Right lobe of liver (tissue), 6 donors: ENCODE measurements at regions of chr1 and their contacts with region 1.

Region 1: DNA sequence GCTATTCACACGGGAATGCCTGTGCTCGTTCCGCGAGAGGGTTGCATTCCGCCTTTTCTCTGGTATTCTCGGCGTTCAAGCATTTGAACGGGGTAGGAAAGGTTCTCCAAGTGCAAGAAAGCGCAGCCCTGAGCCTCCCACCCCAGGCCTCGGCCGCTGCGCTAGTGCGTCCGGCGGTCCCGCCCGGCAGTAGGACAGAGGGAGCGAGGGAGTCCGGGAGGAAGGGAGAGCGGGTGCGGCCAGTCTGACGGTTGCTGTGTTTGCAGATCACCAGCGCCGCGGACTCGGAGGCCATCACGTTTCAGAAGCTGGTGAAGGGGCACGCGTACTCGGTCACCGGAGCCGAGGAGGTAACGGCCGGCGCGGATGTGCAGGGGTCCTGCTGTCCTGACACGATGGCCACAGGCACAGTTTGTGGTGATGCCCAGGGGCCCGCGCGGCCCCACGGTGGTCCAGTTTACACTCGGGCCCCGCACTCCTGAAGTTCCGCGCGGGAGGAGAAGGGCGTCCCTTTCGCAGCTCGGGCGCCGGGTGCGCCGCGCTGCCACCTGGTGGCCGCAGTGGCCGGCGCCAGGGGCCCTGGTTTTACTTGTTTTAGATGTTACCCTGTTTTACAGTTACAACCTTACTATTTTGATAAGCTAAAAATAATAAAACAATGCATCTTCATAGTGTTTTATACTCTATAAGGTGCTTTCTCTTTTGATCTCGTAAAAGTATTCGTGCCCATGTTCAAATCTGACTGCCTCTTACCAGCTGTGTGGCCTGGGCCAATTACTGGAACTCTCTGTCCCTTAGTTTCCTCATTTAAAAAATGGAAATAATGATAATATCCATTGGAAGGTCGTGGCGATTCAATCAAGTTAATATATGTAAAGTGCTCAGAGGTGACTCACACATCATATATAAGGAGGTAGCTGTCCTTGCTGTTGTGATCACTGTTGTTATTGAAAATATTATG is 36.7 kb downstream of the CAPN2 start:
- DNase-seq: peak; percentile 68 to 78 (median 69)
- ATAC-seq: peak; percentile 89 to 95 (median 92)
- H3K4me3 ChIP-seq: peak overlapping the region; percentile 52 to 59 (median 57)
- H3K27ac ChIP-seq: peak overlapping the region in 2 of 3 donors; percentile 8 to 18
- H3K4me1 ChIP-seq: peaks cover 0 to 14% (median 0%) of the 10 kb centered on the region in 4 donors
- H3K27me3 ChIP-seq: no peaks in the 10 kb centered on the region
- CTCF ChIP-seq: peak; percentile 88 to 97 (median 96)
- POLR2A ChIP-seq: no peak

Region 2: DNA sequence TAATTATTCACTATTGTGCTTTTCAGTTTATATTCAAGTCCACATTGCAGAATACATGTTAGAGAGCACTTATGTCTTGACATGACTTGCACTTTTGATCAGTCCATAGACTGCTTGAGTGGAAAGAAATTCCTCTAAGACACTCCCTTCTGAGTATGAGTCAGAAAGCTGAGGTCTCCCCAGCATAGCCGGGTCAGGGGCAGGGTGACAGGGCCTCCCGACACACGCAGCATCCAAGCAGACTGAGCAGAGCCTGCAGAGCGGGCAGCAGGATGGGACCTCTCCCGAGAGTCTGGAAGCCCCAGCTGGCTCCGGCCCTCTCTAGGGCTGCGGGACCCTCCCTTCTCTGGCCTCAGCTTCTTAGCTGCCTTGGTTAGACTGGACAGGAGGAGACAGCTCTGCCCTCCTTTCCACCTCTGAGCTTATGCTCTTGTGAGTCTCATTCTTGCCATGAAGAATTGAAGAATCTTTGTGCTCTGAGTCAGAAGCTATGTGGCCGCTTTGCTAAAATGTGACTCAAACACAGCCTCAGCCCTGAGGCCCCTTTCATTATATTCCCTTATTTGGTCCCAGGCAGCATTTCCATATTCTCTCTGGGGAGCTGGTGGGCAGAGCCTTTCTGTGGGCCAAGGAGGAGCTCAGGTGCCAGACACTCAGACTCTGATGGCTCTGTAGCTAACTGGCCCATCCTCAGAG is 48.0 kb before region 1 on chr1:
- intact Hi-C with region 1: no loop called
- DNase-seq: no peak
- ATAC-seq: peak in 1 of 4 donors; percentile 22
- H3K4me3 ChIP-seq: no peak overlapping the region
- H3K27ac ChIP-seq: no peak overlapping the region
- H3K4me1 ChIP-seq: peaks cover 0 to 4% (median 0%) of the 10 kb centered on the region in 4 donors
- H3K27me3 ChIP-seq: no peaks in the 10 kb centered on the region
- CTCF ChIP-seq: no peak
- POLR2A ChIP-seq: no peak

Region 3: DNA sequence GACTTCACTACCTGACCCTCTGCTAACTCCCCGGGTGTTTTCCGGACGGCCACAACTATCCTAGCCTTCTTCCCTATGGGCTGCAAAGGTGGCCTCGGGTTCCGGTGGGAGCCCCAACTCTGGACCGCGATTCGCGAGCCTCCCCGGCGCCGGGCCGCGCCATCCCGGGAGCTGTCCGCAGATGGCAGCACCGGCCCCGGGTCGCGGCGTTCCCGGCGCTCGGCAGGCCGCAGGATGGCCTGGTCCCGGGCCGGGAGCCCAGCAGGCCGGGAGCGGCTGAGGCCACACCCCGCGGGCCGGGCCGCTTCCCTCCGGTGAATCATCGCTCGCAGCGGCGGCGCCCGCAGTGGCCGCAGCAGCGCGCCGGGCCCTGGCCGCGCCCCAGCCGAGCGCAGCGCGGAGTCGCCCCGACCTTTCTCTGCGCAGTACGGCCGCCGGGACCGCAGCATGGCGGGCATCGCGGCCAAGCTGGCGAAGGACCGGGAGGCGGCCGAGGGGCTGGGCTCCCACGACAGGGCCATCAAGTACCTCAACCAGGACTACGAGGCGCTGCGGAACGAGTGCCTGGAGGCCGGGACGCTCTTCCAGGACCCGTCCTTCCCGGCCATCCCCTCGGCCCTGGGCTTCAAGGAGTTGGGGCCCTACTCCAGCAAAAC is 36.7 kb before region 1 on chr1 and contains the start of gene CAPN2:
- intact Hi-C with region 1: loop called (anchors 5 kb)
- DNase-seq: peak; percentile 85 to 90 (median 87)
- ATAC-seq: peak; percentile 91 to 98 (median 98)
- H3K4me3 ChIP-seq: peak within 1 kb of the TSS; percentile 68 to 92 (median 71)
- H3K27ac ChIP-seq: peak within 1 kb of the TSS; percentile 57 to 94 (median 69)
- H3K4me1 ChIP-seq: peaks cover 0 to 6% (median 3%) of the 10 kb centered on the region in 4 donors
- H3K27me3 ChIP-seq: no peaks in the 10 kb centered on the region
- CTCF ChIP-seq: peak; percentile 74 to 88 (median 78)
- POLR2A ChIP-seq: peak; percentile 91
- total RNA-seq, gene CAPN2: 17.5 to 53.1 (median 33.1) TPM